ENCODE measurements at regions of chr9 and their contacts with region 1.

Region 1: GRCh38 chr9:7570107-7570720 is 229.4 kb downstream of the DMAC1 start:
- DNase-seq: peak in 1 of 2 experiments; percentile 9
- H3K4me3 ChIP-seq: no peak overlapping the region
- H3K27ac ChIP-seq: no peak overlapping the region
- H3K4me1 ChIP-seq: no peaks in the 10 kb centered on the region
- H3K27me3 ChIP-seq: no peaks in the 10 kb centered on the region
- CTCF ChIP-seq: peak; percentile 78

Region 2: GRCh38 chr9:8278048-8278447 is 707.8 kb after region 1 on chr9:
- CTCF ChIA-PET with region 1: no interaction called
- POLR2A ChIA-PET with region 1: no interaction called
- intact Hi-C with region 1: loop called (anchors 10 kb)
- DNase-seq: no peak
- H3K4me3 ChIP-seq: no peak overlapping the region
- H3K27ac ChIP-seq: no peak overlapping the region
- H3K4me1 ChIP-seq: no peaks in the 10 kb centered on the region
- H3K27me3 ChIP-seq: no peaks in the 10 kb centered on the region
- CTCF ChIP-seq: no peak

Region 3: DNA sequence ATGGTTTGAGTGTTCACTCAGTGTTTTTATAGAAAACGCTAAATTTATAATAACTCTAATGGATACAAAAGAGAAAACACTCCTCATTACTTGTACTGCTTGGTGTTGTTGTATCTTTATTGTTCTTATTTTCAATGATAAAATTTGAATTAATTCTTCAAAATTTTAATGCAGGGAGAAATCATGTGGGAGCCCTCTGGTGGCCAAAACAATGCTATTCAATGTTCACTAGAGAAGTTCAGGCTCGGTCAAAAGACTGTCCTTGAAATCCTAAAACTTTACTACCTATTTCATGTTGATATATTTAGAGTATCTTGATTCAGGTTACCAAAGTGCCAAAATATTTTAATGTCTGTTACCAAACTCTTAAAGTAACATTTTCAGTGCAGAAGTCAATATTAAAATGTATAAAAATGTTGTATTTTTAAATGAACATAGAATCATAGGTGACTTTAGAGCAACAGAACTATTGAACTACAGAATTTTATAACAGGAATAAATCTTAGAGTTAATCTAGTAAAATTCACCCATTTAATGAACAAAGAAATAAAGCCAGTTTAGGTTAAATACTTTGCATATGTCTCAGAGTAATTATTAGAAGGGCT is 1782.8 kb after region 1 on chr9:
- CTCF ChIA-PET with region 1: no interaction called
- POLR2A ChIA-PET with region 1: no interaction called
- intact Hi-C with region 1: loop called (anchors 10 kb)
- DNase-seq: no peak
- H3K4me3 ChIP-seq: no peak overlapping the region
- H3K27ac ChIP-seq: no peak overlapping the region
- H3K4me1 ChIP-seq: no peaks in the 10 kb centered on the region
- H3K27me3 ChIP-seq: no peaks in the 10 kb centered on the region
- CTCF ChIP-seq: peak; percentile 63